ENCODE measurements at regions of chr6 and their contacts with region 1.

Region 1: DNA sequence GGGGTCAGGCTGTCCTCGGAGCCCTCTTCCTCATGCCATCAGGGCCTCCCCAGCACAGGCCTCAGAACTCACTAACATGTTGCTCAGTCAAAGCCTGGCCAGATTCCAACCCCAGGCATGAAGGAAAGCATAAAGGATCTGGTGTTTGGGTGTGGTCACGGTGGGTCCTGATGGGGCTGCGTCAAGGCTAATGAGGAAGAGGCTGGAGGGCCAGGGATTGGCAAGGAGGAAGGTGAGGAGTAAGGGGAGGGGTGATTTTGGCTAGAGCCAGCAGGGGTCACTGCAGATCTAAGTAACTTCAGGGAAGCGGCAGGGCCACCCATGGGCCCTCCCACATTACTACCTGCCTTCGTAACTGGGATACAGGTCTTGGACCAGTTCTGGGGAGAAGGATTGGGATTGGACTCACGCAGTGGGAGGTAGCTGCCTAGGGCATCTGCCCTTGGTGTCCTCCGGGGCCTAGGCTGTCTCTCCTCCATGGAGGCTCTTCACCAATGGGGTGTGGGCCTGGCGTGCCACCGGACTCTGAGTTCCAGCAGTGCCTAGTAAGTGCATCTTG is 36.2 kb upstream of the MRPS18A start:
- DNase-seq: peak; percentile 83

Region 2: GRCh38 chr6:43644931-43645612 is 78.7 kb before region 1 on chr6 and contains the start of gene RSPH9:
- intact Hi-C with region 1: no loop called
- DNase-seq: peak; percentile 87
- total RNA-seq, gene RSPH9: 0.24 TPM

Region 3: DNA sequence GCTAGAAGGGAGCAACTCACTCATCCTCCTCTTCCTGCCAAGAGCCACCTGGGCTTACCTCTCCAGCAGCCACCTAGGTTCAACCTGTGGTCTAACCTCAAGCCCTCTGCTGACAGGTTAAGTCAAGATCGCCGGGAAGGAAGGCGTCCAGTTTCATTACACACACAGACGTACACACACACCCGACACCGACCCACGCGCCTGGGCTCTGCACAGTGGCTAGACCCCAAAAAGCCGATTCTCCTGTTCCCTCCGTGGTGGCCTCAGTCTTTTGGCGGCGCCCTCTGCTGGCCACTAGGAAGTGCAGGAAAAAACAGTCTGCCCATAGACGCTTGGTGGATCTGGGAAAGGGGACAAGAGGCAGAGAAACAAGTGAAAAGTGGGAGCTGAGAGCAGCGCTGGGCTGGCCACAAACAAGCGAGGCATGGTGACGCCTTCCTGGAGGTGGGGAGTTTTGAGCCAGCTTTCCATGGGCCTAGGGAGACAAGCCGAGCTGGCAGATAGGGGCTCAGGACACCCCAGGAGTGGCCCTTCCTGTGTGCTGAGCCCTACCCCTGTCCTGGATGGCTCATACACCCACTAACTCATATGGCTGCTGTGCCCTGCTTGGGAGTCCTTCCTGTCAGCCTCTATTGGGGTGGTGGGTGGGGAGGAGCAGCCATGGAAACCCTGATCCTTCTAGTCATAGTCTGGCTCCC is 350.8 kb after region 1 on chr6:
- intact Hi-C with region 1: loop called (anchors 1 kb)
- DNase-seq: no peak